Activated CD8-positive, alpha-beta T cell treated with anti-CD3 and anti-CD28 coated beads, Interleukin-2, amount 10 ng/mL, durations not matched to agents 7 days and 5 days (primary cell): ENCODE measurements at regions of chr5 and their contacts with region 1.

Region 1: GRCh38 chr5:95646554-95647431 is at the start of gene RFESD:
- DNase-seq: peak; percentile 97
- ATAC-seq: peak; percentile 97
- H3K4me3 Mint-ChIP-seq: peak within 1 kb of the TSS; percentile 78
- H3K27ac Mint-ChIP-seq: peak within 1 kb of the TSS; percentile 88
- H3K4me1 Mint-ChIP-seq: peaks cover 36% of the 10 kb centered on the region
- H3K27me3 Mint-ChIP-seq: no peaks in the 10 kb centered on the region
- total RNA-seq, gene RFESD: 4.9 to 5.1 TPM

Region 2: DNA sequence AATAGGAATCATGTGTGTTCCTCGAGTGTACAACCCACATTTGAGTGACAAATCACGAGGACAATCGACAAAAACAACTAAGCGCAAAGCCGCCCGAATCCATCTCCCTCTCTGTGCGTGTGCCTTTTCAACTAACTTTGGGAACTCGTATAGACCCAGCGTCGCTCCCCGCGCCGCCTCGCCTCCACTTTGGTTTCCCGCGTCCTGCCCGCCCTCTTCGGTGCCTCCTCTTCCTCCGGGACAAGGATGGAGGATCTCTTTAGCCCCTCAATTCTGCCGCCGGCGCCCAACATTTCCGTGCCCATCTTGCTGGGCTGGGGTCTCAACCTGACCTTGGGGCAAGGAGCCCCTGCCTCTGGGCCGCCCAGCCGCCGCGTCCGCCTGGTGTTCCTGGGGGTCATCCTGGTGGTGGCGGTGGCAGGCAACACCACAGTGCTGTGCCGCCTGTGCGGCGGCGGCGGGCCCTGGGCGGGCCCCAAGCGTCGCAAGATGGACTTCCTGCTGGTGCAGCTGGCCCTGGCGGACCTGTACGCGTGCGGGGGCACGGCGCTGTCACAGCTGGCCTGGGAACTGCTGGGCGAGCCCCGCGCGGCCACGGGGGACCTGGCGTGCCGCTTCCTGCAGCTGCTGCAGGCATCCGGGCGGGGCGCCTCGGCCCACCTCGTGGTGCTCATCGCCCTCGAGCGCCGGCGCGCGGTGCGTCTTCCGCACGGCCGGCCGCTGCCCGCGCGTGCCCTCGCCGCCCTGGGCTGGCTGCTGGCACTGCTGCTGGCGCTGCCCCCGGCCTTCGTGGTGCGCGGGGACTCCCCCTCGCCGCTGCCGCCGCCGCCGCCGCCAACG is 26.5 kb before region 1 on chr5 and contains the start of gene GPR150:
- CTCF ChIA-PET with region 1: interaction called, 17 read pairs
- POLR2A ChIA-PET with region 1: interaction called, 7 read pairs
- DNase-seq: peak; percentile 76
- ATAC-seq: peak; percentile 74
- H3K4me3 Mint-ChIP-seq: peak within 1 kb of the TSS; percentile 85
- H3K27ac Mint-ChIP-seq: peak within 1 kb of the TSS; percentile 74
- H3K4me1 Mint-ChIP-seq: peaks cover 47% of the 10 kb centered on the region
- H3K27me3 Mint-ChIP-seq: no peaks in the 10 kb centered on the region
- total RNA-seq, gene GPR150: 0.74 to 0.83 TPM